Dendritic cell treated with granulocyte-macrophage colony-stimulating factor and Interleukin-4, amounts not matched to agents 40 ng/mL and 50 ng/mL, for 4 days (primary cell): ENCODE measurements at regions of chr5 and their contacts with region 1.

Region 1: DNA sequence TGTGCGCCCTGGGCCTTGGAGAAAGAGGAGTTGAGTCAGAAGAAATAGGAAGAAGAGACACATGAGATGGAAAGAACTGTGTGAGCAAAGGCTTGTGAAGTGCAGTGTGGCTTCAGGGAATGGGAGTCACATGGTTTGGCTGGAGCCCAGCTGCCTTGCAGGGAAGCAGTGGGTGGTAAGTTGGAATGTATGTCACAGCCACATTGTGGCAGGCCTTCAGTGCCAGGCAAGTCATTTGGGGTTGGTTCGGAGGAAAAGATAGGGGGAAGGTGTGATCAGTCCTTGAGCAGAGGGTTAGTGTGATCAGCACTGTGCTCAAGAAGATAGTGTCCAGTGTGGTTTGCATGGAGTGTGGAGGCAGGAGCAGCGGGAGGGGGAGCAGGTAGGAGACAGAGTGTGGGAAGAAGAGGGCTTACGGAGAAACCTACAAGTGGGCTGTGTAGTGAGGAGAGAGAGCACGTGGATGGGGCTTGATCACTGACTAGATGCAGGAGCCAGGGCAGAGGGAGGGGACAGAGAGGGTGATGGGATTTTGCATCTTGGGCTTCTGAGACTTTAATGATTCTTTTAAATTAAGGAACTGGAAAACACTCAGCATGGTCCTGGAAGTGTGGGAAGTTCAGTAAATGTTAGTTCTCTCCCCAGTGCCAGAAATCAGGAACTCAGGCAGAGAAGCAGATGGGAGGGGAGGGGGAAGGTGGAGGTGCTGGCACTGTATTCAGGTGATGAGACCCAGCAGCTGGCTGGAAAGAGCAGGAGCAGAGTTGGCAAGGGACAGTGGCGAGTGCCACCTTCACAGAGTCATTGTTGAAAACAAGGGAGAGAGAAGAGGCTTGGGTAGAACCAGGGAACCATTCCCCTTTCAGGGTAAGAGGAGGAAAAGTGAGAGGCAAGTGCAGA is 46.6 kb downstream of the ARHGAP26 start:
- H3K4me3 Mint-ChIP-seq: peak overlapping the region; percentile 59
- H3K27ac Mint-ChIP-seq: peak overlapping the region; percentile 87
- H3K4me1 Mint-ChIP-seq: peaks cover 94% of the 10 kb centered on the region
- H3K27me3 Mint-ChIP-seq: no peaks in the 10 kb centered on the region

Region 2: GRCh38 chr5:141513627-141514329 is 1303.0 kb before region 1 on chr5:
- intact Hi-C with region 1: no loop called
- H3K4me3 Mint-ChIP-seq: peak overlapping the region; percentile 74
- H3K27ac Mint-ChIP-seq: peak overlapping the region; percentile 55
- H3K4me1 Mint-ChIP-seq: peaks cover 80% of the 10 kb centered on the region
- H3K27me3 Mint-ChIP-seq: peaks cover 21% of the 10 kb centered on the region

Region 3: GRCh38 chr5:142769741-142770631 is 46.8 kb before region 1 on chr5 and contains the start of gene ARHGAP26:
- intact Hi-C with region 1: loop called (anchors 5 kb)
- H3K4me3 Mint-ChIP-seq: peak within 1 kb of the TSS; percentile 98
- H3K27ac Mint-ChIP-seq: peak within 1 kb of the TSS; percentile 94
- H3K4me1 Mint-ChIP-seq: peaks cover 58% of the 10 kb centered on the region
- H3K27me3 Mint-ChIP-seq: no peaks in the 10 kb centered on the region

Region 4: DNA sequence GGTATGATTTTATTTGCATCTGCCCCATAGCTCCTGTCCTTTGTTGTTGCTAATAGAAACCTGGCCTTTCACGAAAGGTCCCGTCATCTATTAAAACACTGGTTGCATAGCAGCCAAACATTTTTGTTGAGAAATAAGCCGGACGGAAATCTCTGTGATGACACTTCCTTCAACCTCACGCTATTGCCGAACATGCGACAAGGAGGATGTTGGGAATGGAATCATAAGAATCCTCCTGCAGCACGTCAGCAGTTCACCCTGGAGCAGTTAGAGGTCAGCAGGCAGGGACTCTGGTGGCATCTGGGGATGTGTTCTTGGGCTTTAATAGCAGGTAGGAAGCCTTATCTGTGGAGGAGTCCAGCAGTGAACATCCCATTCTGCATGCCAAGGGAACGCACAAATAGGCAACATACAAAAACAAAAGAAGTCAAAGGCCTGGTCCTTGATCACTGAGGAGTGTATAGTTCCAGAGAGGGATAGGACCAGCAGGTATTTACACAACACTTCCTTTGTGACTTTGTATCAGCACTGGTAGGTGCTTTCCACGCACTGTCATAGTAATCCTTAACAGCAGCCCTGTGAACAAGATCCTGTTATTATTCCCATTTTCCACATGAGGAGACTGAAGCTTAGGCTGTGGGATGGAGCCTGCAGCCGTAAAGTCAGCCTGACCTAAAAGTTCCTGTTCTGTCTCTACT is 13.2 kb before region 1 on chr5:
- intact Hi-C with region 1: loop called (anchors 2 kb)
- H3K4me3 Mint-ChIP-seq: no peak overlapping the region
- H3K27ac Mint-ChIP-seq: peak overlapping the region; percentile 87
- H3K4me1 Mint-ChIP-seq: peaks cover 86% of the 10 kb centered on the region
- H3K27me3 Mint-ChIP-seq: no peaks in the 10 kb centered on the region

Region 5: GRCh38 chr5:142869883-142870282 is 53.1 kb after region 1 on chr5:
- intact Hi-C with region 1: loop called (anchors 10 kb)
- H3K4me3 Mint-ChIP-seq: no peak overlapping the region
- H3K27ac Mint-ChIP-seq: peak overlapping the region; percentile 38
- H3K4me1 Mint-ChIP-seq: peaks cover 79% of the 10 kb centered on the region
- H3K27me3 Mint-ChIP-seq: no peaks in the 10 kb centered on the region

Region 6: GRCh38 chr5:142900927-142901326 is 84.1 kb after region 1 on chr5:
- intact Hi-C with region 1: no loop called
- H3K4me3 Mint-ChIP-seq: no peak overlapping the region
- H3K27ac Mint-ChIP-seq: no peak overlapping the region
- H3K4me1 Mint-ChIP-seq: peaks cover 42% of the 10 kb centered on the region
- H3K27me3 Mint-ChIP-seq: no peaks in the 10 kb centered on the region